ENCODE measurements at regions of chr11 and their contacts with region 1.

Region 1: GRCh38 chr11:33362051-33362910 is 105.1 kb downstream of the HIPK3 start:
- DNase-seq: peak; percentile 54 to 81 (median 74)
- H3K4me3 ChIP-seq: peak overlapping the region in 1 of 7 experiments; percentile 15
- H3K27ac ChIP-seq: no peak overlapping the region
- H3K4me1 ChIP-seq: peaks cover 0 to 2% (median 0%) of the 10 kb centered on the region in 4 experiments
- H3K27me3 ChIP-seq: peaks cover 0 to 4% (median 0%) of the 10 kb centered on the region in 5 experiments

Region 2: GRCh38 chr11:33687733-33688479 is 325.6 kb after region 1 on chr11:
- CTCF ChIA-PET with region 1: interaction called, 41 read pairs
- POLR2A ChIA-PET with region 1: no interaction called
- DNase-seq: peak; percentile 38 to 54 (median 50)
- H3K4me3 ChIP-seq: no peak overlapping the region
- H3K27ac ChIP-seq: no peak overlapping the region
- H3K4me1 ChIP-seq: peaks cover 0 to 9% (median 2%) of the 10 kb centered on the region in 4 experiments
- H3K27me3 ChIP-seq: peaks cover 0 to 2% (median 0%) of the 10 kb centered on the region in 5 experiments

Measured in common myeloid progenitor, CD34-positive (primary cell).